B cell (primary cell): ENCODE measurements at regions of chr20 and their contacts with region 1.

Region 1: GRCh38 chr20:34069341-34070078 is 42.5 kb downstream of the EIF2S2 start:
- DNase-seq: peak; percentile 75
- ATAC-seq: peak; percentile 90
- H3K4me3 ChIP-seq: no peak overlapping the region
- H3K4me3 Mint-ChIP-seq: no peak overlapping the region
- H3K27ac ChIP-seq: no peak overlapping the region
- H3K27ac Mint-ChIP-seq: peak overlapping the region; percentile 59
- H3K4me1 ChIP-seq: peaks cover 9 to 13% of the 10 kb centered on the region in 2 donors
- H3K4me1 Mint-ChIP-seq: peaks cover 21% of the 10 kb centered on the region
- H3K27me3 ChIP-seq: no peaks in the 10 kb centered on the region
- H3K27me3 Mint-ChIP-seq: no peaks in the 10 kb centered on the region
- CTCF ChIP-seq: peak; percentile 74

Region 2: DNA sequence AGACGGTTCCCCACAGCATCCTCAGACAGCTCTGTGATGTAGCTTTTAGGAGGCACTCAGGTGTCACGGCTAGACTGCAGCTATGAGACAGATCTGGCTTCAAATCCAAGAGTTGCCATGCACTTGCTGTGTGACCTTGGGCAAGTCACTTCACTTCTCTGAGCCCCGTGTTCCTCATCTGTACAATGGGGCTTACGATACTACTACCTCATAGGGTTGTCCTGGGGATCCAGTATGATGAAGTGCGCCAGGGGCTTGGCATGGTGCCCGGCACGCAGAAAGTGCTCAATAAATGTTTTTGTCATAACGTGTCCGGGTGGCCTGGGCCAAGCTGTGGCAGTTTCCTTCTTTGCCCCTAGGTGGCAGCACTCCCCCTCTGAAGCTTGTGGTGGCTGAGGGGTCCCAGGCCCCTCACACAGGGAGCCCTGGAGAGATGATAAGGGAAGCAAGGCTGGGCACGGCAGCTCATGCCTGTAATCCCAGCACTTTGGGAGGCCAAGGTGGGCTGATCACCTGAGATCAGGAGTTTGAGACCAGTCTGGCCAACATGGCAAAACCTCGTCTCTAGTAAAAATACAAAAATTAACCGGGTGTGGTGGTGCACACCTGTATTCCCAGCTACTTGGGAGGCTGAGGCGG is 277.4 kb before region 1 on chr20:
- CTCF ChIA-PET with region 1: interaction called, 25 read pairs
- POLR2A ChIA-PET with region 1: no interaction called
- intact Hi-C with region 1: loop called (anchors 1 kb)
- DNase-seq: peak; percentile 64
- ATAC-seq: peak; percentile 57
- H3K4me3 ChIP-seq: no peak overlapping the region
- H3K4me3 Mint-ChIP-seq: no peak overlapping the region
- H3K27ac ChIP-seq: no peak overlapping the region
- H3K27ac Mint-ChIP-seq: no peak overlapping the region
- H3K4me1 ChIP-seq: peaks cover 6 to 11% of the 10 kb centered on the region in 2 donors
- H3K4me1 Mint-ChIP-seq: peaks cover 18% of the 10 kb centered on the region
- H3K27me3 ChIP-seq: no peaks in the 10 kb centered on the region
- H3K27me3 Mint-ChIP-seq: no peaks in the 10 kb centered on the region
- CTCF ChIP-seq: peak; percentile 82

Region 3: DNA sequence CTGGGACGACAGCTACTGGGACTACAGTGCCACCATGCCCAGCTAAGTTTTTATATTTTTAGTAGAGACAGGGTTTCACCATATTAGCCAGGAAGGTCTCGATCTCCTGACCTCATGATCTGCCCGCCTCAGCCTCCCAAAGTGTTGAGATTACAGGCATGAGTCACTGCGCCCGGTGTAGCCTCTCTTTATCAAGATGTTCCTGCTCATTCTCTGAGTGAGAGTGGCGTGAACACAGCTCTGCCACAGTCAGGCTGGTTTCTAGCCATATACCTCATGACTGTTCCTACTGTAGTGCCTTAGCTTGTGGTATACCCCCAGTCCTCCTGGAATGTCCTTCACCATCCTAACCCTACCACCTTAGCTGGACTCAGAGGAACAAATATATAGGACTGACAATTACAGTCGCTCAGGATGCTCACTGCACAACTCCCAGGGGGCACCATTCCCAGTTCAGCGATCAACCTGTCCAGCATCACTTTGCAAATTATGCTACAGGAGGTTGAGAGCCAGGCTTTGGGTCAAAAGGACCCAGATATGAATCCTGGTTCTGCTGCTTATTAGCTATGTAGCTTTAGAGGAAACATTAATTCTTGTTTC is 172.1 kb before region 1 on chr20:
- CTCF ChIA-PET with region 1: interaction called, 12 read pairs
- POLR2A ChIA-PET with region 1: no interaction called
- intact Hi-C with region 1: no loop called
- DNase-seq: no peak
- ATAC-seq: no peak
- H3K4me3 ChIP-seq: no peak overlapping the region
- H3K4me3 Mint-ChIP-seq: no peak overlapping the region
- H3K27ac ChIP-seq: no peak overlapping the region
- H3K27ac Mint-ChIP-seq: no peak overlapping the region
- H3K4me1 ChIP-seq: no peaks in the 10 kb centered on the region
- H3K4me1 Mint-ChIP-seq: no peaks in the 10 kb centered on the region
- H3K27me3 ChIP-seq: peaks cover 0 to 14% (median 3%) of the 10 kb centered on the region in 4 experiments
- H3K27me3 Mint-ChIP-seq: peaks cover 38% of the 10 kb centered on the region
- CTCF ChIP-seq: no peak

Region 4: DNA sequence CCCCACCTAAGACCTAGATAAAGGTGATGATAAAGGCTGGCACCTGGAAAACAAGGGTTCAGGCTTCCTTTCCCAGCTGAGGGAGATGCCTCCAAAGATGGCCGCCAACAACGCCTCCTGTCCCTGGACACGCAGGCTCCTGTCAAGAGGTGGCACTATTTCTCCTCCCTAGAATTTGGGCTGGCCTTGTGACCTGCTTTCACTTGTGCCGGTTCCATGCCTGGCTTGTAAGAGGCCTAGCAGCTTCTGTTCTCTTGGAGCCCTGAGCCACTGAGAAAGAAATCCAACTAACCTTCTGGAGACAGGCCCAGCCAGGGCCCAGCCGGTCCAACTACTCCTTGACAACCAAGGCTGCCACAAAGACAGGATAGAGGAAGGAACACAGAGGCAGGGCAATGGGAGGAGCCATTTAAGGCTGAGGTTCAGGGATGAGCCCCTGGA is 136.0 kb before region 1 on chr20:
- CTCF ChIA-PET with region 1: interaction called, 15 read pairs
- POLR2A ChIA-PET with region 1: no interaction called
- intact Hi-C with region 1: no loop called
- DNase-seq: peak; percentile 47
- ATAC-seq: peak; percentile 45
- H3K4me3 ChIP-seq: no peak overlapping the region
- H3K4me3 Mint-ChIP-seq: no peak overlapping the region
- H3K27ac ChIP-seq: no peak overlapping the region
- H3K27ac Mint-ChIP-seq: no peak overlapping the region
- H3K4me1 ChIP-seq: no peaks in the 10 kb centered on the region
- H3K4me1 Mint-ChIP-seq: no peaks in the 10 kb centered on the region
- H3K27me3 ChIP-seq: no peaks in the 10 kb centered on the region
- H3K27me3 Mint-ChIP-seq: peaks cover 13% of the 10 kb centered on the region
- CTCF ChIP-seq: no peak

Region 5: GRCh38 chr20:34129518-34130162 is 60.1 kb after region 1 on chr20:
- CTCF ChIA-PET with region 1: interaction called, 14 read pairs
- POLR2A ChIA-PET with region 1: no interaction called
- intact Hi-C with region 1: loop called (anchors 1 kb)
- DNase-seq: peak; percentile 81
- ATAC-seq: peak; percentile 97
- H3K4me3 ChIP-seq: peak overlapping the region in 2 of 5 experiments; percentile 8 to 15
- H3K4me3 Mint-ChIP-seq: peak overlapping the region; percentile 26
- H3K27ac ChIP-seq: no peak overlapping the region
- H3K27ac Mint-ChIP-seq: no peak overlapping the region
- H3K4me1 ChIP-seq: peaks cover 4 to 6% of the 10 kb centered on the region in 2 donors
- H3K4me1 Mint-ChIP-seq: peaks cover 7% of the 10 kb centered on the region
- H3K27me3 ChIP-seq: no peaks in the 10 kb centered on the region
- H3K27me3 Mint-ChIP-seq: peaks cover 4% of the 10 kb centered on the region
- CTCF ChIP-seq: peak; percentile 93

Region 6: DNA sequence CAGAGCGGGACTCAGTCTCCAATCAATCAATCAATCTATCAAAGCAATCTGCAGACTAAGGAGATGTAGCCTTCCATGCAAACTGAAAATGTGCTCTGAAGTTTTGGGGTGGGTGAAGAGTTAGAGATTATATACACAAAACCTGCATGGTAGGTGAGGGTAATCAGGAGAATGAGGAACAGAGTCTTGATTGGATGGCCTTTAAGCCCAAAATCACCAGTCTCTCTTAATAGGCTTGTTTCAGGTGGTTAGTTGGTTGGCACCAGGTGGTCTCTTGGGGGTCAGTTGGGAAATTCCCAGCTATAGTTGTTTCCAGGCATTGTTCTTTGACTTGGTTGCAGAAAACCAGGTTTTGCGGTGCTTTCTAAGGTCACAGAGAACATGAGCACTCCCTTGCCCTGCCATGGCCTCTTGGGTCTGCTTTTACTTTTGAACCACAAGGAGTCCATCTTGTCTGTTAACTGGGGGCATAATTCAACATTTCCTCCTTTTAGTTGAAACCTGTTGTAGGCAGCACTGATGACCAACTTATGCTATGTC is 75.8 kb after region 1 on chr20:
- CTCF ChIA-PET with region 1: no interaction called
- POLR2A ChIA-PET with region 1: no interaction called
- intact Hi-C with region 1: no loop called
- DNase-seq: no peak
- ATAC-seq: no peak
- H3K4me3 ChIP-seq: no peak overlapping the region
- H3K4me3 Mint-ChIP-seq: no peak overlapping the region
- H3K27ac ChIP-seq: no peak overlapping the region
- H3K27ac Mint-ChIP-seq: no peak overlapping the region
- H3K4me1 ChIP-seq: no peaks in the 10 kb centered on the region
- H3K4me1 Mint-ChIP-seq: no peaks in the 10 kb centered on the region
- H3K27me3 ChIP-seq: no peaks in the 10 kb centered on the region
- H3K27me3 Mint-ChIP-seq: peaks cover 11% of the 10 kb centered on the region
- CTCF ChIP-seq: no peak